ENCODE measurements at regions of chr17 and their contacts with region 1.

Region 1: DNA sequence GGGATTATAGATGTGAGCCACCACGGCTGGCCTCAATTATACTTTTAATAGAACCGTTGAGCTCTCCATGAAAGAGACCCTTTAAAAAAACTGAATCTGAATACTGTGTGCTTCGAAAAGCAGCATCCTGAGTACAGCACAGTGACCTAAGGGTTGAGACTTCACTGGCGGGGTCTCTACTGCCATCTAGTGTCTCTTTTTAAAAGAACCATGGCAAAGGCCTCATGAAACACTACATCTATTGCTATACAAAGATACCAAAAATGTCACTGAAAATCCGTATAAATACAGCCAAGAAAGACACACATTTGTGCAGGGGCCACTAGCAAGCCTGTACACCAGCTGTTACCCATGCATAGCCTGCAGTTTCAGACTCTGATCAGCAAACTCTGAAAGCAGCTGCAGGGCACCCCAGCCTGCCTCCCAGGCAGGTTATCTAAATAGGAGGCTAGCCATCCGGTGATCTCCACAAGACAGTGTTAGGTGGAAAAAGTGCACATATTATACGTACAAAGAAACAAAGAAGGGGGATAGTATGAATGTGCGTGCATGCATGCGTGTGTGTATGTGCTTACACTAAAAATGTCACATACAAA is 35.3 kb downstream of the NPLOC4 start:
- DNase-seq: no peak
- ATAC-seq: peak; percentile 79 to 83

Region 2: DNA sequence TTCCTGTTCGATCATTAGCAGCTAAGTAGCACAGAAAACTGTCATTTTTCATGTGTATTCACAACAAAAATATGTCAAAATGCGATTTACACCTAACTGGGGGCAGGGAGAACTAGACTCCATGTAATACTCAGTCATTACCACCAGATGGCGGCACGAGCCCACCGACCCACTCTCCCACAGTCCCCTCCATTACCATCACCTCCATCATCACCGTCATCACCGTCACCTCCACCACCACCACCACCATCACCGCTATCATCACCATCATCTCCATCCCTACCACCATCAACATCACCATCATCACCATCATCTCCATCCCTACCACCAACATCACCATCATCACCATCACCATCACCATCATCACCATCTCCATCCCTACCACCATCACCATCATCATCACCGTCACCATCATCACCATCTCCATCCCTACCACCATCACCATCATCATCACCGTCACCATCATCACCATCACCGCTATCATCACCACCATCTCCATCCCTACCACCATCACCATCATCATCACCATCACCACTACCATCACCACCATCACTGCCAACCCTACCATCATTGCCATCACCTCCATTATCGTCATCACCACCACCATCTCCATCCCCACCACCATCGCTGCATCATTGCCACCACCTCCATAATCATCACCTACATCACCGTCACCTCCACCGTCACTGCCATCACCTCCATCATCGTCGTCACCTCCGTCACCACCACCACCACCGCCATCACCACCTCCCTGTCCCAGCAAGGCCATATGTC is 348.1 kb before region 1 on chr17:
- intact Hi-C with region 1: loop called in 1 of 2 experiments (anchors 10 kb)
- DNase-seq: no peak
- ATAC-seq: peak; percentile 20 to 22

Region 3: GRCh38 chr17:81514739-81515529 is 86.7 kb before region 1 on chr17:
- intact Hi-C with region 1: loop called in 1 of 2 experiments (anchors 5 kb)
- DNase-seq: peak; percentile 89
- ATAC-seq: peak; percentile 39 to 48

Measured in left cardiac atrium (tissue), 4 donors.